ENCODE measurements at regions of chr15 and their contacts with region 1.

Region 1: DNA sequence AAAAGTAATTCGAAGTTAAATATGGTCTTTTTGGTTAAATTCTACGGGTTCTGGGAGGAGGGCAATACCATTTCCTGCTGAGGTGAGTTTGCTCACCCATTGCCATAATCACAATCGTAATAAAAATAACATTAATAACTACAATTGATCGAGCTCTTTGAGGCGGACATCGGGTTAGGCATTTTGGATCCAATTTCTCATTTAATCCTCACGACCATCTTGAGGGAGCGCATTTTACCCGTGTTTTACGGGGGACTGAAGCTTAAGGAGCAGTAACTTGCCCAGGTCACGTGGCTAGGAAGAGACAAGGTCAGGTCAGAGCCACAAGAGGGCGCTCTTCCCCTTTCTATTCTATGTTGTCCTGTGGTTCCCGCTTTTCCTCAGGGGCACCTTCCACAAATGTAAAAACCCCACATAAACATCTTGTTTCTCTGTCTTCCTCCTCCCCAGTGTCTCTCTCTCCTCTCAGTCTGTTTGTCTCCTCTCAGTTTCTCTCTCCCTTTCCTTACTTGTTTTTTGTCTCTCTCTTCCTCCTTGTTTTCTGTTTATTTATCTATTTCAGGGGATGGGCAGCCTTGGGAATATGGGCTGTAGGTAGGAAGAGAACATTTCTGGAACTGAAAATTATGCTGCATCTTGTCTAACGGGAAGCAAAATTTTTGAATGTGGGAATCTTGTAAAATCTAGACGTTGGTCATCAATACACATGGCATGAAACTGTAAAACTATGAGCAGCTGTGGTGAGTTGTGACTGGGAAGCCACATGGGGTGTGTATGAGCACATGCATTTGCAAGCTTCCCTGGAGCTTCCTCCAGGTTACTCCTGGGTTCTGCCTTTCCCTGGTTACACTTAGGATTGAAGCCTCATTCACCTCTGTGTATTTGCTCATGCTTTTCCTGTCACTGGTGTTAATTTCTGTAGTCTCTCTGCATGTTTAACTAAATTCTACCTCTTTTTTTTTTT is 71.0 kb downstream of the SQOR start:
- DNase-seq: peak; percentile 60 to 84 (median 75)
- ATAC-seq: peak; percentile 96
- H3K4me3 ChIP-seq: peak overlapping the region; percentile 14; the same call in 1 of the 2 replicates
- H3K27ac ChIP-seq: no peak overlapping the region
- H3K4me1 ChIP-seq: peaks cover 0 to 8% of the 10 kb centered on the region in 2 experiments; a peak in 1 of 5 replicates
- H3K27me3 ChIP-seq: peaks cover 0 to 7% of the 10 kb centered on the region in 2 experiments; a peak in 2 of 5 replicates
- CTCF ChIP-seq: peak; percentile 69 to 91 (median 86)
- EP300 ChIP-seq: no peak
- POLR2A ChIP-seq: no peak
- RAD21 ChIP-seq: peak; percentile 68 to 74

Region 2: DNA sequence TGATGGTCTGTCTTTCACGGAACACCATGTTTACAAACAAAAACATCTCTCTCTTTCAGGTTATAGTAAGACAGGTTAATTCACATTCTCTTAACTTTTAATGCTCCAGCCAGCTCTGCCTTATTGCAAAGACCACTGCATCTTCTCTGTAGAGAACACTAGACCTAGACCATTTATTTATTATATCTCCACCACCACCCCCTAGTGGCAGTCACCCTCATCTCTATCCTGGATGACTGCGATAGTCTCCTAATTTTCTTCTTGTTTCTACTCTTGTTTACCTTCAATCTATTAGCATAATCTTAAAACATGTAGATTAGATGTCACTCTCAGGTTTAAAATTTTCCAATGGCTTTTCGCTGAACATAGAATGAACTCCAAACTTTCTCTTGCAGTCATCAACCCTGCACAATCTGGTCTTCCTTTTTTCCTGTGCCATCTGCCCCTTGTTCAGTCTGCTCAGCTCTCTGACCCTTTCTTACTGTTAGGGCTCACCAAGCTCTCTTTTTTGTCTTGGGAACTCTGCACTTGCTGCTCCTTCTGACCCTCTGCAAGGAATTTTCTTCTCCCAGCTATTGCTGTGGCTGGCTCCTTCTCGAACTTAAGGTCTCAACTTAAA is 84.6 kb after region 1 on chr15:
- CTCF ChIA-PET with region 1: interaction called, 14 read pairs
- POLR2A ChIA-PET with region 1: no interaction called
- in situ Hi-C with region 1: no loop called
- intact Hi-C with region 1: loop called (anchors 5 kb)
- DNase-seq: peak in 3 of 4 experiments; percentile 6 to 11 (median 9)
- ATAC-seq: peak; percentile 53; the same call in 1 of the 3 replicates
- H3K4me3 ChIP-seq: no peak overlapping the region
- H3K27ac ChIP-seq: no peak overlapping the region
- H3K4me1 ChIP-seq: no peaks in the 10 kb centered on the region
- H3K27me3 ChIP-seq: no peaks in the 10 kb centered on the region
- CTCF ChIP-seq: peak in 2 of 3 experiments; percentile 15 to 42; a peak in 2 of 6 replicates
- EP300 ChIP-seq: no peak
- POLR2A ChIP-seq: no peak
- RAD21 ChIP-seq: peak in 1 of 2 experiments; percentile 45; a peak in 2 of 4 replicates

Measured in K562 (cell line).